ENCODE measurements at regions of chr12 and their contacts with region 1.

Region 1: DNA sequence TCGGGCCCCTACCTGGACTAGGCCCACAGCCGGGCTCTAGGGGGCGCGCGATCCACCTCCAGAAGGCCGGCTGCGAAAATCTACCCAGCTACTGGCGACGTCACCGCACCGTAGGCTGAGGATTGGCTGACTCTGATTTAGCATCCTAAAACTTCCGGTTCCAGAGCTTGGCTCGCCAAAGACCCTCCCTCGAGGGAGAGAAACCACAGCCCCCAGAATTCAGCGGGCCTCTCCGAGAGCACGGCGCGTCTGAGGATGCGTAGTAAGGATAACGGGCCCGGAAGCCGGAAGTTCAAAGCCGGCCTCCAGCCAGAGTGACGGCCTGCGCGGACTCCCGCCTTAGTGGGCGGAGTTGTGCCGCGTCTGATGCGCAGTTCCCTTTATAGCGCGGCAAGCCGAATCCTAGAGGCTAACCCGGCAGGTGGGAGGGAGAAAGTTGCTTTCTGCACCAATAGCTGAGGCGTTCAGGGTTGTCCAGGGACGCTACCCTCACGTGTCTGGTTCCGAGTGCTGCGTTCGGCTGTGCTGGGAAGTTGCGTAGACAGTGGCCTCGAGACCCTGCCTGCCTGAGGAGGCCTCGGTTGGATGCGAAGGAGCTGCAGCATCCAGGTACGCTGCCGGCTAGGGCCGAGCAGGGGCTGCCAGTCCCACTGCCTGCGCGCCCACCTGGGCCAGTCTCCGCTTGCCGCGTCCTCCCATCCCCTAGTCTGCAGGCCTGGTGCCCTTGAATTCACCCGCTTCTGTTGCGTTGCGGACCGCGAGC is at the start of gene COX14:
- DNase-seq: peak; percentile 98 to 100 (median 99)
- H3K4me3 ChIP-seq: peak within 1 kb of the TSS; percentile 91
- H3K4me3 Mint-ChIP-seq: peak within 1 kb of the TSS; percentile 94 to 99 (median 97)
- H3K27ac ChIP-seq: peak within 1 kb of the TSS; percentile 98
- H3K27ac Mint-ChIP-seq: peak within 1 kb of the TSS; percentile 96 to 100 (median 98)
- H3K4me1 ChIP-seq: peaks cover 29% of the 10 kb centered on the region
- H3K4me1 Mint-ChIP-seq: peaks cover 30 to 48% (median 41%) of the 10 kb centered on the region in 3 donors
- H3K27me3 ChIP-seq: no peaks in the 10 kb centered on the region
- H3K27me3 Mint-ChIP-seq: no peaks in the 10 kb centered on the region
- total RNA-seq, gene COX14: 58.7 to 59.2 TPM

Region 2: DNA sequence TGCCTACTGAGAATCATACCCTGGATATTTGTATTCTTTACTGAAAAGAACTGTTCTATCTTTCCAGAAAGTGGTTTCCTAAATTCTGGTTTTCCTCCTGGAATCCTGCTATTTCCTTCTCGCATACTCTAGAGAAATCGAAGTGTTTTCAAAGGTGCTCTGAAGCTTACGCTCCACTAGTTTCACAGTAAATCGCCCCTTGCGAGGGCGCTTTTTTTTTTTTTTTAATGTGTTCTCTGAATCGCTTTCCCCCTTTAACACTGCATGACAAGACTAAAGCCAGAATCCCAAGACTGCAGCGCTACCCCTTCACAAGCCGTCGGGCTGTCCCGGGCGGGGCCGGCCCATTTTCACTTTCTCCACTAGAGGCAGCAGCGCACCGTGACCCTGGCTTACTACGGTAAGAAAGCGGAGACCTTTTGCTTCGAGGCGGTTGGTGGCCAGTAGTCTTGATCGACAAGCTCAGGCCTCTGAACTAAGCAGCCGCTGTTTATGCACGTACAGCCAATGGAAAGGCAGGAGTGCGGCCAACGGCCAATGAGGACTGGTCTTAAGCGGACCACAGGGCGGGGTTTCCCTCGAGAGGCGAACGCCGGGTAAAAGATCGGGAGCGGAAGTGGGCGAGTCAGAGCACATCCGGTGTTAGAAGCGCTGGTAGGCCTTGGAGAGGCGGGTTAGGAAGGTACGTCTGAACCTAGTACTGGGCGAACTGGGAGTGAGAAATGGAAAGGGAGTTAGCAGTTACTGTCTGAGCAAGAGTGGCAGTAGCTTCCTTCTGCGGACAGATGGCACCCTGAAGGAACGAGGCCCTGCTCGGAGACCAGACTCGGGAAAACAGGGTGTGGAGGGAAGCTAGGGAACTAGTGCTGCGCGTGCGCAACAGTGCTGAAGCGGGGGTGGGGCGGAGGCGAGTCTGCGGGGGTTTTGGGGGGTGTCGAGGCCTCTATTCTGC is 370.7 kb before region 1 on chr12 and contains the start of gene TMBIM6:
- CTCF ChIA-PET with region 1: no interaction called
- POLR2A ChIA-PET with region 1: interaction called, 10 read pairs
- DNase-seq: peak; percentile 97 to 100 (median 99)
- H3K4me3 ChIP-seq: peak within 1 kb of the TSS; percentile 88
- H3K4me3 Mint-ChIP-seq: peak within 1 kb of the TSS; percentile 91 to 100 (median 94)
- H3K27ac ChIP-seq: peak within 1 kb of the TSS; percentile 99
- H3K27ac Mint-ChIP-seq: peak within 1 kb of the TSS; percentile 94 to 100 (median 99)
- H3K4me1 ChIP-seq: peaks cover 43% of the 10 kb centered on the region
- H3K4me1 Mint-ChIP-seq: peaks cover 44 to 51% (median 48%) of the 10 kb centered on the region in 3 donors
- H3K27me3 ChIP-seq: no peaks in the 10 kb centered on the region
- H3K27me3 Mint-ChIP-seq: peaks cover 0 to 4% of the 10 kb centered on the region in 2 donors
- total RNA-seq, gene TMBIM6: 443 to 449 TPM

Region 3: GRCh38 chr12:50074936-50075807 is 36.7 kb before region 1 on chr12:
- CTCF ChIA-PET with region 1: interaction called, 26 read pairs
- POLR2A ChIA-PET with region 1: interaction called, 4 read pairs
- DNase-seq: peak; percentile 60 to 85 (median 71)
- H3K4me3 ChIP-seq: no peak overlapping the region
- H3K4me3 Mint-ChIP-seq: no peak overlapping the region
- H3K27ac ChIP-seq: no peak overlapping the region
- H3K27ac Mint-ChIP-seq: peak overlapping the region in 3 of 8 donors; percentile 11 to 74 (median 39)
- H3K4me1 ChIP-seq: peaks cover 4% of the 10 kb centered on the region
- H3K4me1 Mint-ChIP-seq: peaks cover 5 to 9% (median 5%) of the 10 kb centered on the region in 3 donors
- H3K27me3 ChIP-seq: no peaks in the 10 kb centered on the region
- H3K27me3 Mint-ChIP-seq: peaks cover 3 to 8% of the 10 kb centered on the region in 2 donors

Region 4: GRCh38 chr12:50097952-50098351 is 13.9 kb before region 1 on chr12:
- CTCF ChIA-PET with region 1: interaction called, 41 read pairs
- POLR2A ChIA-PET with region 1: interaction called, 6 read pairs
- DNase-seq: no peak
- H3K4me3 ChIP-seq: no peak overlapping the region
- H3K4me3 Mint-ChIP-seq: no peak overlapping the region
- H3K27ac ChIP-seq: no peak overlapping the region
- H3K27ac Mint-ChIP-seq: no peak overlapping the region
- H3K4me1 ChIP-seq: no peaks in the 10 kb centered on the region
- H3K4me1 Mint-ChIP-seq: no peaks in the 10 kb centered on the region
- H3K27me3 ChIP-seq: no peaks in the 10 kb centered on the region
- H3K27me3 Mint-ChIP-seq: no peaks in the 10 kb centered on the region

Region 5: DNA sequence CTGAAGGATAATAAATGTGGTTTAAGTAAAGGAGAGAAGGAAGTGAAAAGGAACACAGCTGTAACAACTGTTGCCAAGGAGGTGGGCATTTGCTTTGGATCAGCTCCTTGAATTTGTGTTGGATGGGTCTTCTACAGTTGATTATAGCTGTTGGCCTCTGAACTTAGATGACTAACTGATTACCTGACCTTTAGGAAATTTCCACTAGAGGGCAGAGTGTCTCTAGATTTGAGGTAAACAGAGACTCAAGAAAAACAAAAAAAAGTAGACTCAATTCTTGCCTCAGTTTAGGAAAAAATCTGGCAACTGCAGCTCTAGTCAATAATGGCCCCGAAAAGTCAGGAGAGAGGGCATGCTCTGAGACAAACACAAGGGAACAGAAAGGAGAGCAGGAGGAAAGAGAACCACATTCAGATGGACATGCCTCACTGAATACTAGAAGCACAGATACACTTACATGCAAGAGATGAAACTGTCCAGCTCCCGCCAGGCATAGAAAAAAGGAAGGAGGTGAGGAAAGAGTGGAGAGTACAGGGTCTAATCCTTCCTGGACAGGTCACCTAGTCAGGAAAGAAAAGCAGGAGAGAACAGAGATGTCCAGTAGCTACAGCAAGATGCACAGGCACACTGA is 20.7 kb after region 1 on chr12:
- CTCF ChIA-PET with region 1: interaction called, 69 read pairs
- POLR2A ChIA-PET with region 1: interaction called, 4 read pairs
- DNase-seq: peak in 2 of 5 donors; percentile 26 to 42
- H3K4me3 ChIP-seq: no peak overlapping the region
- H3K4me3 Mint-ChIP-seq: no peak overlapping the region
- H3K27ac ChIP-seq: no peak overlapping the region
- H3K27ac Mint-ChIP-seq: peak overlapping the region in 7 of 8 donors; percentile 23 to 87 (median 82)
- H3K4me1 ChIP-seq: no peaks in the 10 kb centered on the region
- H3K4me1 Mint-ChIP-seq: peaks cover 9 to 28% (median 27%) of the 10 kb centered on the region in 3 donors
- H3K27me3 ChIP-seq: no peaks in the 10 kb centered on the region
- H3K27me3 Mint-ChIP-seq: no peaks in the 10 kb centered on the region

Region 6: DNA sequence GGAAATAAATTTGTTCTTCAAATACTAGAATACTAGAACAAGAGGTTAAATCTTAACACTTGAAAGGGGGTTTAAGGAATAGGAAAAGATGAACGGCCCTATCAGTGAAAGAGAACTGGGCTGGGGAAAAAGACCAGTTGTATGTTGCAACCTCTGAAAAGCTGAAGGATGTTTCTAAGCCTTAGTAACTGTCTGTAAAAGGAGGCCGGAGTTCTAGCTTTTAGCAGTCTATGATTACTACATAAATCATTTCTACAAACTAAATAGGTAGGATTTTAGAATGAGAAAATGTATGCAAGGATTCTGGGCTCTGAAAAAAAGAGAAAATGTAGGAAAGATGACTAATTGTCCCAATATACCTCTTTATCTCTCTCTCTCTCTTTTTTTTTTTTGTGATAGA is 50.4 kb after region 1 on chr12:
- CTCF ChIA-PET with region 1: interaction called, 38 read pairs
- POLR2A ChIA-PET with region 1: interaction called, 50 read pairs
- DNase-seq: no peak
- H3K4me3 ChIP-seq: no peak overlapping the region
- H3K4me3 Mint-ChIP-seq: no peak overlapping the region
- H3K27ac ChIP-seq: no peak overlapping the region
- H3K27ac Mint-ChIP-seq: no peak overlapping the region
- H3K4me1 ChIP-seq: peaks cover 20% of the 10 kb centered on the region
- H3K4me1 Mint-ChIP-seq: peaks cover 35 to 62% (median 54%) of the 10 kb centered on the region in 3 donors
- H3K27me3 ChIP-seq: no peaks in the 10 kb centered on the region
- H3K27me3 Mint-ChIP-seq: no peaks in the 10 kb centered on the region

Region 7: DNA sequence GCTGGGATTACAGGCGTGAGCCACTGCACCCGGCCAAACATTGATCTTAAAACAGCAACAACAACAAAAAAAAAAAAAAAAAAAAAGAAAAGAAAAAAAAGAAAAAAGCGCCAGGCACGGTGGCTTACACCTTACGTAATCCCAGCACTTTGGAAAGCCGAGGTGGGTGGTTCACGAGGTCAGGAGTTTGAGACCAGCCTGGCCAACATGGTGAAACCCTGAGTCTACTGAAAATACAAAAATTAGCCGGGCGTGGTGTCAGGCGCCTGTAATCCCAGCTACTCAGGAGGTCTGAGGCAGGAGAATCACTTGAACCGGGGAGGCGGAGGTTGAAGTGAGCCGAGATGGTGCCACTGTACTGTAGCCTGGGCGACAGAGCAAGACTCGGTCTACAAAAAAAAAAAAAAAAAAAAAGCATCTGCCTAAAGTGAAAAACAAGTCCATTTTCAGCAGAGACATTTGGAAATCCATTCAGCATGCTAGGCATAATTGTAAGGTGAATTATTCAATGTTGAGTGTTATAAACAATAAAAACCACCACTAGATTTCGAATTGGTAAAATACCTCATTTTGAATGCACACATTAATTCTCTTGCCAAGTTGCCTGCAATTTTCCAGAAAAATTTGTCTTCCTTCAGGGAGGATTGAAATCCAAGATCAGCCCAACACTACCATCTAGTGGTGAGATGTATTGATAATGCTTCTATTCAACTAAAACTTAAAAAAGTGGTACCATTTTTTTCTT is 63.3 kb after region 1 on chr12:
- CTCF ChIA-PET with region 1: interaction called, 19 read pairs
- POLR2A ChIA-PET with region 1: interaction called, 7 read pairs
- DNase-seq: peak in 2 of 5 donors; percentile 48 to 54
- H3K4me3 ChIP-seq: no peak overlapping the region
- H3K4me3 Mint-ChIP-seq: no peak overlapping the region
- H3K27ac ChIP-seq: no peak overlapping the region
- H3K27ac Mint-ChIP-seq: peak overlapping the region in 1 of 8 donors; percentile 53
- H3K4me1 ChIP-seq: no peaks in the 10 kb centered on the region
- H3K4me1 Mint-ChIP-seq: no peaks in the 10 kb centered on the region
- H3K27me3 ChIP-seq: no peaks in the 10 kb centered on the region
- H3K27me3 Mint-ChIP-seq: no peaks in the 10 kb centered on the region

Measured in CD8-positive, alpha-beta memory T cell (primary cell).